Kidney (tissue), 22 donors: ENCODE measurements at regions of chr14 and their contacts with region 1.

Region 1: GRCh38 chr14:30005114-30005808 is 77.6 kb upstream of the PRKD1 start:
- DNase-seq: peak in 2 of 5 donors; percentile 64 to 75
- H3K4me3 ChIP-seq: no peak overlapping the region
- H3K27ac ChIP-seq: no peak overlapping the region
- H3K4me1 ChIP-seq: peaks cover 0 to 10% (median 0%) of the 10 kb centered on the region in 3 donors
- H3K27me3 ChIP-seq: no peaks in the 10 kb centered on the region
- CTCF ChIP-seq: peak; percentile 75

Region 2: GRCh38 chr14:29558516-29558915 is 446.7 kb before region 1 on chr14:
- intact Hi-C with region 1: loop called (anchors 10 kb)
- DNase-seq: no peak
- H3K4me3 ChIP-seq: no peak overlapping the region
- H3K27ac ChIP-seq: no peak overlapping the region
- H3K4me1 ChIP-seq: no peaks in the 10 kb centered on the region
- H3K27me3 ChIP-seq: no peaks in the 10 kb centered on the region
- CTCF ChIP-seq: no peak